Endothelial cell of umbilical vein (primary cell): ENCODE measurements at regions of chr11 and their contacts with region 1.

Region 1: GRCh38 chr11:74427385-74427886 is 29.2 kb upstream of the PGM2L1 start:
- DNase-seq: peak; percentile 81
- H3K4me3 ChIP-seq: no peak overlapping the region
- H3K27ac ChIP-seq: peak overlapping the region; percentile 73
- H3K4me1 ChIP-seq: peaks cover 14% of the 10 kb centered on the region
- H3K27me3 ChIP-seq: no peaks in the 10 kb centered on the region
- CTCF ChIP-seq: no peak
- POLR2A ChIP-seq: no peak

Region 2: GRCh38 chr11:74398244-74399159 is 28.9 kb before region 1 on chr11 and contains the start of gene PGM2L1:
- CTCF ChIA-PET with region 1: no interaction called
- POLR2A ChIA-PET with region 1: no interaction called
- dilution Hi-C with region 1: no loop called
- intact Hi-C with region 1: no loop called
- DNase-seq: peak; percentile 95
- H3K4me3 ChIP-seq: peak within 1 kb of the TSS; percentile 36 to 96 (median 73)
- H3K27ac ChIP-seq: peak within 1 kb of the TSS; percentile 67
- H3K4me1 ChIP-seq: peaks cover 12% of the 10 kb centered on the region
- H3K27me3 ChIP-seq: no peaks in the 10 kb centered on the region
- CTCF ChIP-seq: no peak
- POLR2A ChIP-seq: peak; percentile 87
- total RNA-seq, gene PGM2L1: 24.7 and 31.4 TPM in 2 replicates

Region 3: DNA sequence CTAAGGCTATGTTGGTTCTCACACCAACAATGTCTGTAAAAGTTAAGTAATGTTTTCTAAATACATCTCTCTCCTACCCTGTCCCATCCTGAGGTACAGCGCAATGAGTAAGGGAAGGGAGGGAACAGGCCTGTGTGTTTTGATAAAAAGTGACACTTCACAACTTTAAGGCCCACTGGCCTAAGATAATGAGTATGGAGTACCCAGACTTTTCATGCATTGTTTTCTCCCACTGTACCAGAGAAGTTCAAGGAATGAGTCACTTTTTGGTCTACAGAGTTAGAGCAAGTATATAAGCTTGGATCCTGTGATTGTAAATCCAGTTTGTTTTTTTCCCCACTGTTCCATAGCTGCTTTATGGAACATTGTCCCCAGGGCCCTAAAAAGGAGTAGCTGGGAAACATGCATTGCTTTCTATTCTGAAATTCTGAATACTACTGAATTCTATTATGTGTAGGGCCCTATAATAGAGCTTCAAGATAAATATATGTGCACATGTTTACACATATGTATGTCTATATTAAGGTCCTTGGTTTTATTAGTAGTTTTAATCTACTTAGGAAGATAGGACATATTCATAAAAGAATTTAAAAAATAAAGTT is 10.1 kb after region 1 on chr11:
- CTCF ChIA-PET with region 1: interaction called, 10 read pairs
- POLR2A ChIA-PET with region 1: no interaction called
- dilution Hi-C with region 1: no loop called
- intact Hi-C with region 1: no loop called
- DNase-seq: peak; percentile 82
- H3K4me3 ChIP-seq: no peak overlapping the region
- H3K27ac ChIP-seq: peak overlapping the region; percentile 52
- H3K4me1 ChIP-seq: peaks cover 14% of the 10 kb centered on the region
- H3K27me3 ChIP-seq: no peaks in the 10 kb centered on the region
- CTCF ChIP-seq: no peak
- POLR2A ChIP-seq: no peak

Region 4: GRCh38 chr11:74460481-74461154 is 33.2 kb after region 1 on chr11:
- CTCF ChIA-PET with region 1: no interaction called
- POLR2A ChIA-PET with region 1: no interaction called
- dilution Hi-C with region 1: no loop called
- intact Hi-C with region 1: no loop called
- DNase-seq: peak; percentile 15
- H3K4me3 ChIP-seq: no peak overlapping the region
- H3K27ac ChIP-seq: no peak overlapping the region
- H3K4me1 ChIP-seq: peaks cover 7% of the 10 kb centered on the region
- H3K27me3 ChIP-seq: peaks cover 4 to 16% of the 10 kb centered on the region in 2 experiments
- CTCF ChIP-seq: no peak
- POLR2A ChIP-seq: no peak